Astrocyte of the cerebellum (primary cell): ENCODE measurements at regions of chr16 and their contacts with region 1.

Region 1: DNA sequence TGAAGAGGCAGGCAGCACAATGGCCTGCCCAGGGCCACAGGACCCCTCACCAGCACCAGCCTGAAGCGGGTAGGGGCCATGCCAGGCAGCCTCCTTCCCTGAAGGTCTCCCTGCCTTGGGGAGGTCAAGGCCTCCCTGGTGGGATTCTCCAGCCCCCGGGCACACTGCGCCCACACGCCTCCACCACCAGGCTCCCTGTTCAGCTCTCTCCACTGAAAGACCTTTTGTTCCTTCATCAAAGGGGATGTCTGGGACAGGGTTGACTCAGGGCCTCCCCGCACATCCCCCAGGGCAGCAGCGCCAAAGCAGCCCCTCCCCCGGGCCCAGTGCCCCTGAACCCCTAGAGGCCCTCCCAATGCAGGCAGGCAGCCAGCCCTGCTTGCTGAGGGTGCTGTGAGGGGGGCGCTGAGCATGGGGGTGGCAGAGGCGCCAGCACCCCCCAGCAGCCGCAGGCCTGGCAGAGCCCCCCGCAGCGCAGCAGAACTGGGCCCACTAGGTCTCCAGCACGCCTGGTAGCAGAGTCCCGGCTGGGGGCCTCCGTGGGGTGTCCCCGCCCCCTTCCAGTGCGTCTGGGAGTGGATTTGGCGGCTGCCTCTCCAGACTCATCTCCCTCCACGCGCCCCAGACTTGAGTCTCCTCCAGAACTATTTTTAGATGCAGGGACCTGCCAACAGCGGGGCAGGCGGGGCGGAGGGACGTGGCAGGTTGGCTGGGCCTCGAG is 13.1 kb downstream of the BCAR1 start:
- DNase-seq: peak; percentile 75
- H3K4me3 ChIP-seq: no peak overlapping the region
- CTCF ChIP-seq: no peak

Region 2: DNA sequence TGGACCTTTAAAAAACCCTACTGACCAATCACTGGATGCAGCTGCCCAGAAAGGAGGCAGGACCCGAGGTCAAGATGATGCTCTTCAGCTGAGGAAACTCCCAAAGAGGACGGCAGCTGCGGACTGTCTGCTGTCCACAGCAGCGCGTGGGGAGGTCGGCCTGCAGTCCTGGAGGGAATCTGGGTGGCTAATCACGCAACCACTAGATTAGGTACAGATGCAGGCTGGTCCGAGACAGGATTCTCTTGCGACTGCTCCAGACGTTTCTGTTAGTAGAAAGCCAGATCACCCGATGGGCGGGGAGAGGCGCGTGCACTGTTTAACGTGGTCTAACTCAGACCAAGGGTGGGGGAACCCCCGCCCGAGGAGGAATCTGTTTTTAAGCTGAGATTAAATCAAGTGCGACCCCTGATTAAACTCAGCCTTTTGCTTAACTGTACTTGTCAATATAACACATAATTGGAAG is 40.1 kb before region 1 on chr16:
- in situ Hi-C with region 1: loop called (anchors 5 kb)
- DNase-seq: no peak
- H3K4me3 ChIP-seq: no peak overlapping the region
- CTCF ChIP-seq: no peak

Region 3: DNA sequence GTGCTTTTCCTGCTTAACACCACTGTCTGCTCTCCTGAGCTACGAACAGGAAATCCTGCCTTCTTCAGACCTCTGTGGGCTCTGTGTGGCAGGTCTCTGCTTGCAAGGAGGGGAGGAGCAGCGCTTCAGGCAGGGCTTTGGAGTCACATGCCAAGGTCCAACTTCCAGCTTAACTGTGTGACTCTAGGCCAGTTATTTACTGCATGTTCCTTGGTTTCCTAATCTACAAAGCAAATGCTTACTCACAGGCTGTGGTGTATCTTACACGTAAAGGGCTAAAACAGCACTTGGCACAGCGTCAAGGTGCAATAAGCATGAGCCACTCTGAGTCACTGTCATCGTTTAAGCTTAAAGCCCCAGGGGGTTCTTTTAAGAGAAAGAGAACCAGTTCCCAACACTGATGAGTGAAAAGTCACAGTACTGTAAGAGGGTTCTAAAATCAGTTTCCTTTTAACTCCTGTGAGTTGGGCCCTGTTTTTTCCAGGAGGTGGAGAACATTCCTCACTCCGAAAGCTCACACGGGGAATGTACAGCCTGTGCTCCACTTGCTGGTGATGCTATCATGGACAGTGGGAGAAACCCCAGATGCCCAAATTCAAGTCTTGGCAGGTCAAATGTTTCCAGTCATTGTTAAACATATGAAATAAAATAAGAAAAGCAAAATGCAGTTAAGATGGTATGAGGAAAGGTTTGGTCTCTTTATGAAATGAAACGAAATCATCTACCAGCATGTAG is 67.2 kb after region 1 on chr16:
- in situ Hi-C with region 1: loop called (anchors 5 kb)
- DNase-seq: peak; percentile 100
- H3K4me3 ChIP-seq: no peak overlapping the region
- CTCF ChIP-seq: peak; percentile 23